HEK293 (cell line): ENCODE measurements at regions of chr19 and their contacts with region 1.

Region 1: DNA sequence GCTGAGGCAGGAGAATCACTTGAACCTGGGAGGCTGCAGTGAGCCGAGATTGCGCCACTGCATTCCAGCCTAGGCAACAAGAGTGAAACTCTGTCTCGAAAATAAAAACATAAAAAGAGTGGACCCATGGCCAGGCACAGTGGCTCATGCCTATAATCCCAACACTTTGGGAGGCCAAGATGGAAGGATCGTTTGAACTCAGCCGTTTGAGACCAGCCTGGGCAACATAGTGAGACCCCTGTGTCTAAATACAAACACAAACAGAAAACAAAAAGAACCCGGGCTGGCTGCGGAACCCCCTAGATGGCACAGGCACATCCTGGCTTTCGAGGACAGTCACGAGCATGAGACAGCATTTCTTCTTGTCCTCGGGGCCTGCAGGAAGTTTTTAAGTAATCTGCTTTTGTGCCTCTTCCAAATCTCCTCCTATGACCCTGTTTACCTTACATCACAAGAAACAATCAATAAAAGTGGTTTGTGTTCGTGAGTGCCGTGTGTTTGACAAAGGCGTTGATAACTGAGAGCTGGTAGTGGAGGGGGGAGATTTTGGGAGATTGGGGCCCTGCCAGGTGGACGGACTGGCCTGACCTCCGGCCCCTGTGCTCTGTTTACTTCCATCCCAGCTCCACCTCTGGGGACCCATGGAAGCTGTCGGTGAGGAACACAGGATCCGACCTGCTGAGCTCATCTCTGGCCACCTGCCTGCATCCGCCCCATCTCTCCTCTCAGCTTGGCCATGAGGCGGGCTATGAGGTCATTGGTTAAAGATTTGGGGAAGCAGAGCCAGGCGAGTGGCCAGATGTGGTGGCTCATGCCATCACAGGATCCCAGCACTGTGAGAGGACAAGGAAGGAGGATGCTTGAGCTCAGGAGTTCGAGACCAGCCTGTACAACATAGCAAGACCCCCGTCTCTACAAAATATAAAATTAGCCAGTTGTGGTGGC is 5.9 kb upstream of the GDF15 start:
- H3K4me3 ChIP-seq: no peak overlapping the region
- H3K27ac ChIP-seq: no peak overlapping the region; the same call in 1 of the 2 replicates
- H3K4me1 ChIP-seq: no peaks in the 10 kb centered on the region
- CTCF ChIP-seq: no peak

Region 2: DNA sequence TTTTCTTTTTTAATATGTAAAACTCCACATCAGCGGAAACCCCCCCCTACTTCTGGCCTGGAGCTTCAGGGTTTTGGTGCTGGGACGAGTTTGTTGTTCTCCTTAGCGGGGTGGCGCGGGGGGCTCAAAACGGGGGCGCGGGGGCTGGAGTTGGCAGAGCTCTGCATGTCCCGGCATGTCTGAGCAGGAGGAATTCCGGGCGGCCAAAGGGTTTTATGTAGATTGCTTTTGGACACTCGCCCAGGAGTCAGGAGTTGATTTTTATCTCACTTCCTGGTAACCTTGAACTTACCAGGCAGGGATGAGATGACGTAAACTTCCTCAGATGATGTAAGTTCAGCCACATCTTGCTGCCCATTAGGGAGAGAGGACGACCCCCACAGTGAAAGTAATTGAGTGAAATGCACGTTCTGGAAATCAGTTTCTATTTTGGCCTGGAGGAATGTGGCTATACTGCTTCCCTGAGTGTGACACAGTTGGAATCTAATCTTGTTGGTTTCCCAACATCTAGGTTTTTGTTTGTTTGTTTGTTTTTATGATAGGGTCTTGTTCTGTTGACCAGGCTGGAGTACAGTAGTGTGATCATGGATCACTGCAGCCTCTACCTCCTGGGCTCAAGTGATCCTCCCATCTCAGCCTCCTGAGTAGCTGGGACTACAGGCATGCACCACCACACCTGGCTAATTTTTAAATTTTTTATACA is 15.1 kb before region 1 on chr19:
- CTCF ChIA-PET with region 1: interaction called, 3 read pairs
- POLR2A ChIA-PET with region 1: interaction called, 10 read pairs
- H3K4me3 ChIP-seq: no peak overlapping the region
- H3K27ac ChIP-seq: peak overlapping the region; percentile 94
- H3K4me1 ChIP-seq: no peaks in the 10 kb centered on the region; the same call in 1 of the 2 replicates
- CTCF ChIP-seq: no peak